ENCODE measurements at regions of chr1 and their contacts with region 1.

Region 1: DNA sequence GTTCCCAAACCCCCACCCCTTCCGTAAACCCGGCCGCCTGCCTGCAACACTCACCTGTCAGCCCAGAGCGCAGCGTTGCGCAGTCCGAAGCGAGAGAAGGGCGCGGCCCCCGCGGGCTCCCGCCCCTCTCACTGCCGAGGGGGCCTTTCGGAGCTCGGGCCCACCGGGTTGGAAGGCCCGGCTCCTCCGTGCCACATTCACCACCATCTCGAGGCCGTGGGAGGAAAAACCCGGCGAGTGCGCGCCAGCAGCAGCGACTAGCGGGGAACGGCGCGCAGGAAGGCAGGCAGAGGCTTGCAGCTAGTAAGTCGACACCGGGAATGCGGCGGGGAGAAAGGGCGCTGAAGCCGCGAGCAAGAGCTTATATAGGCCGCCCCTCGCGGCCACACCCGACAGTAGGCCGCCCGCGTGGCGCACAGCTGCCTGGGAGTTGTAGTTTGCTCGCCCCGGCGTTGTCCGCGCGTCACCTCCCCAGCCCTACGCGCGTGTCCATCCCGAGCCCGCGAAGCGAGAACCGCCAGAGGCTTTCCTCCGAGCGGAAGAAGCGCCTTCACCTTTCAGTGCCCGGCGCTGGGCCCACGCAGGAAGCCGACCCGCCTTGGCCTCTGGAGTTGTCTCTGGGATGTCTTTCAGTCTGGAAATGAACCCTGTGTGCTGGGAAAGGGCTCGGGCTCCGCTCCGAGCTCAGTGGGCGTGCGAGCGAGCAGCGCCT is 10.4 kb upstream of the RAB42 start:
- DNase-seq: peak; percentile 95
- ATAC-seq: peak; percentile 91
- H3K4me3 Mint-ChIP-seq: peak overlapping the region; percentile 100
- H3K27ac Mint-ChIP-seq: peak overlapping the region; percentile 92
- H3K4me1 Mint-ChIP-seq: peaks cover 22% of the 10 kb centered on the region
- H3K27me3 Mint-ChIP-seq: no peaks in the 10 kb centered on the region
- CTCF ChIP-seq: no peak

Region 2: GRCh38 chr1:28329395-28330153 is 252.1 kb before region 1 on chr1:
- CTCF ChIA-PET with region 1: no interaction called
- POLR2A ChIA-PET with region 1: interaction called, 21 read pairs
- intact Hi-C with region 1: no loop called
- DNase-seq: peak; percentile 57
- ATAC-seq: peak; percentile 10
- H3K4me3 Mint-ChIP-seq: peak overlapping the region; percentile 95
- H3K27ac Mint-ChIP-seq: peak overlapping the region; percentile 98
- H3K4me1 Mint-ChIP-seq: peaks cover 32% of the 10 kb centered on the region
- H3K27me3 Mint-ChIP-seq: no peaks in the 10 kb centered on the region
- CTCF ChIP-seq: no peak

Region 3: GRCh38 chr1:28456078-28456477 is 125.6 kb before region 1 on chr1:
- CTCF ChIA-PET with region 1: no interaction called
- POLR2A ChIA-PET with region 1: no interaction called
- intact Hi-C with region 1: no loop called
- DNase-seq: peak; percentile 37
- ATAC-seq: peak; percentile 86
- H3K4me3 Mint-ChIP-seq: peak overlapping the region; percentile 26
- H3K27ac Mint-ChIP-seq: peak overlapping the region; percentile 62
- H3K4me1 Mint-ChIP-seq: peaks cover 12% of the 10 kb centered on the region
- H3K27me3 Mint-ChIP-seq: no peaks in the 10 kb centered on the region
- CTCF ChIP-seq: no peak

Region 4: GRCh38 chr1:28482702-28483101 is 99.0 kb before region 1 on chr1:
- CTCF ChIA-PET with region 1: no interaction called
- POLR2A ChIA-PET with region 1: no interaction called
- intact Hi-C with region 1: no loop called
- DNase-seq: no peak
- ATAC-seq: no peak
- H3K4me3 Mint-ChIP-seq: no peak overlapping the region
- H3K27ac Mint-ChIP-seq: no peak overlapping the region
- H3K4me1 Mint-ChIP-seq: no peaks in the 10 kb centered on the region
- H3K27me3 Mint-ChIP-seq: no peaks in the 10 kb centered on the region
- CTCF ChIP-seq: no peak

Region 5: DNA sequence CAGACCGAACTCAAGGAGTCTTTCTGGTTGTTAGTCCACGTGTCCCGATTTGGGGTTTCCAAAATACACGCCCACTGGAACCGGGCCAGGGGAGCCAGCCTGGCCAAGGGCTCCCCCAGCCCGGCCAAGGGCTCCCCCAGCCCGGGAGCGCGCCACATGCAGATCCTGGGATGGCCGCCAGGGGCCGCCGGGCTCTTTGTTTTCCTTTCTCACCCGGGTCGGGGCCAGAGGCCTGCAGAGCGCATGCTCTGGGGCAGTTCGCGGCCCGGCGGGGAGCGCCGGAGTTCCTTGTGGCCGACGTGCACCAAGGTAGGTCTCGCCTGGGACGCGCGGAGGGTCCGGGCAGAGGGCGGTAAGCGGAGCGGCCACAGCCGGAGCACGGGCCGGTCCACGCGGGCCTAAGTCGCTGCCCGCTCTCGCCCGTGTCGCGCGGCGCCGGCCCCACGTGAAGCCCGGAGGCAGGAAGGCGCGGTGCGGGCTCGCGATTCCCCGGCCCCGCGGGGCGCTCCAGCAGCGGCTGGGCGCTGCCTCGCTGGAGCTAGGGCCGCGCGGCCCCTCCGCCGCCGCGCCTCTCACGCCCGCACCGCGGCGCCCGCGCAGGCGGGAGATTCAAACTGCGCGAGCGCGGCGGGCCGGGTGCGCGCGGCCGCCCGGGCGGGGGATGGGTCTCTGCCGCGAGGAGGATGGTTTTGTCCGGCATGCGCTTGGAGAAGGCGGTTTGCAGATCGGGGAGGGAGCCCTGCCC is 63.5 kb before region 1 on chr1:
- CTCF ChIA-PET with region 1: interaction called, 7 read pairs
- POLR2A ChIA-PET with region 1: interaction called, 315 read pairs
- intact Hi-C with region 1: loop called (anchors 5 kb)
- DNase-seq: peak; percentile 93
- ATAC-seq: peak; percentile 81
- H3K4me3 Mint-ChIP-seq: peak overlapping the region; percentile 81
- H3K27ac Mint-ChIP-seq: peak overlapping the region; percentile 91
- H3K4me1 Mint-ChIP-seq: peaks cover 29% of the 10 kb centered on the region
- H3K27me3 Mint-ChIP-seq: no peaks in the 10 kb centered on the region
- CTCF ChIP-seq: peak; percentile 99

Region 6: GRCh38 chr1:28565040-28565439 is 16.7 kb before region 1 on chr1:
- CTCF ChIA-PET with region 1: interaction called, 4 read pairs
- POLR2A ChIA-PET with region 1: interaction called, 264 read pairs
- intact Hi-C with region 1: no loop called
- DNase-seq: no peak
- ATAC-seq: no peak
- H3K4me3 Mint-ChIP-seq: no peak overlapping the region
- H3K27ac Mint-ChIP-seq: no peak overlapping the region
- H3K4me1 Mint-ChIP-seq: no peaks in the 10 kb centered on the region
- H3K27me3 Mint-ChIP-seq: no peaks in the 10 kb centered on the region
- CTCF ChIP-seq: no peak

Region 7: DNA sequence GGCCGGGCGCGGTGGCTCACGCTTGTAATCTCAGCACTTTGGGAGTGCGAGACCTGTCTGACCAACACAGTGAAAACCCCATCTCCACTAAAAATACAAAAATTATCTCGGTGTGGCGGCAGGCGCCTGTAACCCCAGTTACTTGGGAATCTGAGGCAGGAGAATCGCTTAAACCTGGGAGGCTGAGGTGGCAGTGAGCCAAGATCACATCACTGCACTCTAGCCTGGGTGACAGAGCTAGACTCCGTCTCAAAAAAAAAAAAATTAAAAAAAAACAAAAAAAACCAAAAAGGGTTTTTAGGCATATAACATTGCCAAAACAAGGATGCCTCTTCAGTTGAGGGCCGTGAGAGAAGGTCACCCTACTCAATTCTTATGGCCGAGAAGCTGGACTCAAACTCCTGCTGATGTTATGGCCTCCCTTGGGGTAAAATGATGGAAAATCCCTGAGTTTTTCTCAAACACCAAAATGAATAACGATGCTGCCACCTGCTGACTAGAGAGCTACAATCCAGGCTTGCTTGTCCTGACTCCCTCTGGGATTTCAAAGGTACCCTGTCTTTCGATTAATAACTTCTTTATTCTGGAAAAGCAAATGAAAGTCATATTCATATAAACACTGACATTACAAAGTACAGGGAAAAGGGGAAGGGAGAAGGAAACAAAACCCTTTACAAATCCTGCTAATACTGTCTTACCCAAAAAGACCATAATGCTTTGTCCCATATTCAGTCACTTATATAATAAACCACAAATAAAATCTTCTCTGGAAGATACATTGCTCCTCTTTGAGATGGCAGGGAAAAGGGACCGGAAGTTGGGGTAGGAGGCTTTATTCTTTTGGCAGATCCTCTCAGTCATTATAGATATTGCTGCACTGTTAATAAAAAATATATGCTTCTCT is 21.1 kb after region 1 on chr1:
- CTCF ChIA-PET with region 1: interaction called, 5 read pairs
- POLR2A ChIA-PET with region 1: interaction called, 65 read pairs
- intact Hi-C with region 1: no loop called
- DNase-seq: peak; percentile 50
- ATAC-seq: no peak
- H3K4me3 Mint-ChIP-seq: no peak overlapping the region
- H3K27ac Mint-ChIP-seq: no peak overlapping the region
- H3K4me1 Mint-ChIP-seq: peaks cover 7% of the 10 kb centered on the region
- H3K27me3 Mint-ChIP-seq: no peaks in the 10 kb centered on the region
- CTCF ChIP-seq: peak; percentile 77

Region 8: GRCh38 chr1:28668191-28668955 is 86.7 kb after region 1 on chr1 and contains the start of gene GMEB1:
- CTCF ChIA-PET with region 1: no interaction called
- POLR2A ChIA-PET with region 1: interaction called, 21 read pairs
- intact Hi-C with region 1: no loop called
- DNase-seq: peak; percentile 88
- ATAC-seq: peak; percentile 77
- H3K4me3 Mint-ChIP-seq: peak within 1 kb of the TSS; percentile 93
- H3K27ac Mint-ChIP-seq: peak within 1 kb of the TSS; percentile 98
- H3K4me1 Mint-ChIP-seq: peaks cover 11% of the 10 kb centered on the region
- H3K27me3 Mint-ChIP-seq: no peaks in the 10 kb centered on the region
- CTCF ChIP-seq: no peak
- total RNA-seq, gene GMEB1: 22.0 to 23.3 TPM